ENCODE measurements at regions of chr19 and their contacts with region 1.

Region 1: DNA sequence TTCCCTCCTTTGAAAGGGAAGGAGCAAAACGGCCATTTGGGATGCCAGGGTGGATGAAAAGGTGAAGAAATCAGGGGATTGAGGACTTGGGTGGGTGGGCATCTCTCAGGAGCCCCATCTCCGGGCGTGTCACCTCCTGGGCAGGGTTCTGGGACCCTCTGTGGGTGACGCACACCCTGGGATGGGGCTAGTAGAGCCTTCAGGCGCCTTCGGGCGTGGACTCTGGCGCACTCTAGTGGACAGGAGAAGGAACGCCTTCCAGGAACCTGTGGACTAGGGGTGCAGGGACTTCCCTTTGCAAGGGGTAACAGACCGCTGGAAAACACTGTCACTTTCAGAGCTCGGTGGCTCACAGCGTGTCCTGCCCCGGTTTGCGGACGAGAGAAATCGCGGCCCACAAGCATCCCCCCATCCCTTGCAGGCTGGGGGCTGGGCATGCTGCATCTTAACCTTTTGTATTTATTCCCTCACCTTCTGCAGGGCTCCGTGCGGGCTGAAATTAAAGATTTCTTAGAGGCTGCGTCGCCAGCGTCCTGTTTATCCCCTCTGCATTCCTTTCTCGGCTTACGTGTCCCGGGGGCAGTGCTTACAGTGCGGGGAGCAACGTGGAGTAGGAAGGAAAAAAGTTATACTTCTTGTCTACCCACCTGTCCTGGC is 15.2 kb upstream of the S1PR4 start:
- DNase-seq: peak; percentile 87
- H3K4me3 ChIP-seq: no peak overlapping the region
- H3K27ac ChIP-seq: no peak overlapping the region
- H3K4me1 ChIP-seq: peaks cover 6% of the 10 kb centered on the region
- CTCF ChIP-seq: peak; percentile 95

Region 2: DNA sequence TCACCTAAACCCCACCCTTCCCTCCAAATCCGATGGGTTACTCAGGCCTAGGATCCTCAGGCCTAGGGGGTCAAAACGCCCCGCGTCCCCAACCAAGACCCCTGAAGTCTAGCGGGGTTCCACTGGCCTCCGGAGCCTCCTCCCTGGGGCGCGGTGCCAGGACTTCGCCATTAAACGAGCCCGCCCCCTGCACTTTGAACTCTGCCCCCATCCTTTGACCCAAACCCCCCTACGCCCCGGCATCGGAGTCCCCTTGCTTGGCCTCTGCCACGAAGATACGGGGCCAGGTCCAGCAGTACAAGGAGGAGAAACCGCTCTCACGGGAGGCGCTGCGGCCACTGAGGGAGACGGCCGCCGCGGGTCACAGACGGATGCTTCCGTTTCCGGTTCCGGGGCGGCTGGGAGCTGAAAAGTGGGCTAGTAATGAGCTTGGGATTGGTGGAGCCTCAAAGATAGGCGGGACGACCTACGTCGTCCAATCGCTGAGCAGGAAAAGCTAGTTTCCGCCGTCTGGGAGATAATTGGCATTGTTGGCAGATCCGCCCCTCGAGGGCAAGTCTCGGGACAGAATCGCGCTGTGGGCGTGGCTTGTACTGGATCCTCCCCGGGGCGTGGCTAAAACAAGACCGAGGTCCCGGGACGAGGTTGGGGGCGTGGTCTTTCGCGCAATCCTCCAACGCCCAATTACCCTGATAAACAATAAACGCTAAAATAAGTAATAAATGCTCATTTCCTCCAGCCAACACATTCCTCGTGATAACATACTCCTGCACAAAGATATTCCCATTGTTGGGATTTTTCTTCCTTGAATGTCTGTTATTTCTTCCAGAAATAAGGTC is 212.9 kb before region 1 on chr19:
- CTCF ChIA-PET with region 1: no interaction called
- POLR2A ChIA-PET with region 1: no interaction called
- intact Hi-C with region 1: loop called (anchors 2 kb)
- DNase-seq: peak; percentile 100
- H3K4me3 ChIP-seq: peak overlapping the region; percentile 96
- H3K27ac ChIP-seq: peak overlapping the region; percentile 71
- H3K4me1 ChIP-seq: peaks cover 19% of the 10 kb centered on the region
- CTCF ChIP-seq: no peak

Region 3: GRCh38 chr19:3075895-3076431 is 87.4 kb before region 1 on chr19:
- CTCF ChIA-PET with region 1: no interaction called
- POLR2A ChIA-PET with region 1: no interaction called
- intact Hi-C with region 1: loop called (anchors 2 kb)
- DNase-seq: peak; percentile 72
- H3K4me3 ChIP-seq: peak overlapping the region; percentile 42
- H3K27ac ChIP-seq: no peak overlapping the region
- H3K4me1 ChIP-seq: peaks cover 20% of the 10 kb centered on the region
- CTCF ChIP-seq: peak; percentile 90

Region 4: GRCh38 chr19:3125900-3126524 is 37.3 kb before region 1 on chr19:
- CTCF ChIA-PET with region 1: interaction called, 3 read pairs
- POLR2A ChIA-PET with region 1: no interaction called
- intact Hi-C with region 1: loop called (anchors 1 kb)
- DNase-seq: peak; percentile 63
- H3K4me3 ChIP-seq: no peak overlapping the region
- H3K27ac ChIP-seq: no peak overlapping the region
- H3K4me1 ChIP-seq: peaks cover 12% of the 10 kb centered on the region
- CTCF ChIP-seq: peak; percentile 83

Region 5: GRCh38 chr19:3146677-3147100 is 16.7 kb before region 1 on chr19:
- CTCF ChIA-PET with region 1: no interaction called
- POLR2A ChIA-PET with region 1: no interaction called
- intact Hi-C with region 1: loop called (anchors 1 kb)
- DNase-seq: peak; percentile 38
- H3K4me3 ChIP-seq: no peak overlapping the region
- H3K27ac ChIP-seq: no peak overlapping the region
- H3K4me1 ChIP-seq: peaks cover 17% of the 10 kb centered on the region
- CTCF ChIP-seq: peak; percentile 95

Measured in OCI-LY7 (cell line).